H1 (cell line): ENCODE measurements at regions of chr17 and their contacts with region 1.

Region 1: DNA sequence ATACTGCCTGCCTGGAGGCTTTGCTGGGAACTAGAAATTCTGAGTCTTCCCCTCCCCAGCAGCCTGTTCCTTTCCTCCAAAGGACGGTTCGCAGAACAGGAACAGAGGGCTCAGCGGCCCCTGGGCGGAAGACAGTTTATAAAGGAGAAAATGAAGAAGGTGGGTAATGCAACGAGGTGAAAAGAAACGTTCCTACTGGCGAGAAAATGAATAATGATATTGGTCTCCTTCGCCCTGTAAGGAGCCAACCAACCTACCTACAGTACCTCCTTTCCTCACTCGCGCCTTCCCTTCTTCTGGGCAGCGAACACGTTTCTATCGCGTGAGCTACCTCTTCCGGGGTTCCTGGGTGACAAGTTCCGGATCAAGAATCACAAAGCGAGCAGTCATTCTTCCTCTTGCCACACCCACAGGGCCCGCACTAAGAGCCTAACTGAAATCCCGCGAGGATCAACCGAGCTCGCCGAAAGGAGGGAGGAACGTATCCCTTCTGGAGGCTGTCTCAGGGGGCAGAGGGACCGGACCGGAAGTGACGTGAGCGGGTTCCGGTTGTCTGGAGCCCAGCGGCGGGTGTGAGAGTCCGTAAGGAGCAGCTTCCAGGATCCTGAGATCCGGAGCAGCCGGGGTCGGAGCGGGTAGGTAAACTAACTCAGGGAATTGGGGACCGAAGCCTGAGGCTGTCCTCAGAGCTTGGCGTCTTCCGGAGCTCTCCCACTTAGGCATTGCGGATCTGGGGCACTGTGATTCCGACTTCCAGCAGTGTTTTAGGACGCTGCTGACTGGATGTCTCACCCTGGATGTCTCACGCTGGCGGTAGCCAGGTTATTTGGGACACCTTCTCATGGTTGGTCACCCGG is at the starts of genes PTRH2 and VMP1:
- DNase-seq: peak; percentile 92 to 98
- H3K4me3 ChIP-seq: peak within 1 kb of the TSS; percentile 94 to 99 (median 98)
- H3K27ac ChIP-seq: peak within 1 kb of the TSS; percentile 81
- H3K4me1 ChIP-seq: no peaks in the 10 kb centered on the region; a peak in 1 of 7 replicates
- H3K27me3 ChIP-seq: no peaks in the 10 kb centered on the region
- CTCF ChIP-seq: no peak
- EP300 ChIP-seq: no peak
- POLR2A ChIP-seq: peak; percentile 95 to 98
- RAD21 ChIP-seq: no peak
- total RNA-seq, gene PTRH2: 36.5 and 39.4 TPM in 2 replicates
- total RNA-seq, gene VMP1: 92.6 and 92.7 TPM in 2 replicates

Region 2: DNA sequence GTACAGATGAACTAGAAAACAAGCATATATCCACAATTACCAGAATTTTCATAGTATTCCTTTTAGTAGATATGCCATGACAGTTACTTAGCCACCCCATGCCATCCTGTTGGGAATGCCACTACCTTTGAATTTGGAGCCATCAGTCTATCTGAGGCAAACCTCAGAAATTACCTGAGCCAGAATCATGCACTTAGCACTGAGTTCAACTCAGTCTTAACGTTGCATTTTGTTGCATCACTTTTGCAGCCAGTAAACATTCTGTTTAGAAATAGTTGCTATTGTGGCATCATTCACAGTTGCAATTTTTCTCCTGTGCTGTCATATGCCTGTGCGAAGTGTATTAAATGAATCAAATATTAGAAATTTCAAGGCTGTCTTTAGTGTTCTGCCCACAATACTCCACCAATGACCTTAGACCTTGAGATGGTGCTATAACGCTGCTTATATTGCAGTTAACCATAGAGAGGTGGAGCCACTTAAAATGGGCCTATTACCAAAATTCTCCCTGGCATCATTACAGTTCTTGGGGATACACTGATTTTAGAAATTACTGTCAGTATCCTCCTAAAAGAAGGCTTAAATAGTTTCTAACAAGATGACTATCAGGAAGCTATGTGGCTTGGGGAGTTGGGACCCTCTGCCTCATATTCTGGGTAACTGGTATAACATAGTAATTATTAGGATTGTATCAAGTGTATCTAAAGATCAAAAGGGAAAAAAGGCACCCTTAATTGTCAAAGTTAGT is 11.2 kb before region 1 on chr17:
- CTCF ChIA-PET with region 1: no interaction called
- POLR2A ChIA-PET with region 1: interaction called, 10 read pairs
- DNase-seq: no peak
- H3K4me3 ChIP-seq: no peak overlapping the region
- H3K27ac ChIP-seq: no peak overlapping the region
- H3K4me1 ChIP-seq: peaks cover 0 to 3% (median 0%) of the 10 kb centered on the region in 4 experiments; a peak in 2 of 7 replicates
- H3K27me3 ChIP-seq: no peaks in the 10 kb centered on the region
- CTCF ChIP-seq: no peak
- EP300 ChIP-seq: no peak
- POLR2A ChIP-seq: peak in 1 of 2 experiments; percentile 5
- RAD21 ChIP-seq: no peak